PC-3 (cell line): ENCODE measurements at regions of chr4 and their contacts with region 1.

Region 1: DNA sequence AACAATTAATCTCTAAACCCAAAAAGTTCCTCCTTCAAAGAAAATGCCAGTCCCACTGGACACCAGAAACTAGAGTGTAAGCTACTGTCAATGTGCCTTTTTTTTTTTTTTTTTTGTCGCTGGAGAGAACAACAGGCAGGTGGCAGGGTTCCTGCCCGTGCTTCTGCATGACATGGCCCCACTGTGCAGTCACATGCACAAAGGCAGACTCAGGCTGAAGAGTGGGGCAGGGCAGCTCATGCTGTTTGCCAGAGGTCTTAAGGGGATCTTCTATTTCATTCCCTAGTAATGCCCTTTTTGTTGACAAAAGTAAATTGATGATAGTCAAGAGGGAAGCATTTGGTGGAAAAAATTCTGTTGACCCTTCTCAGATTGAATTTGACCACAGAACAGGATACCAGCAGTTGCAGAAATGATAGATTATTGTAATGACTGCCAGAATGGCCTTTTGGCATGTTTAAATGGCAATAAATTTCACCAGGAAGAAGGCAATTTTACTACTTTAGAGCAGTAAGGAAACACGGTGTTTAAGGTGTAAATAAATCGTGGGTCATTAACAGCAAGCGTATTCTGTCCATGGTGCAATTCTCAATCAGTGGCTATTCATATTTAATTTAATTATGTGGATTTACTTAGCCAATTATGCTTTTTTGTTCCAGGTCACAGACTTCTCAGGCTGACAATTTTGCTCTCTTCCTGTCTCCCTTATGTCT is 80.9 kb downstream of the NKX6-1 start:
- DNase-seq: no peak
- ATAC-seq: no peak; the same call in 1 of the 2 replicates
- H3K4me3 ChIP-seq: no peak overlapping the region
- H3K27ac ChIP-seq: no peak overlapping the region
- H3K4me1 ChIP-seq: no peaks in the 10 kb centered on the region
- H3K27me3 ChIP-seq: no peaks in the 10 kb centered on the region
- CTCF ChIP-seq: no peak

Region 2: GRCh38 chr4:84279678-84280077 is 138.5 kb before region 1 on chr4:
- CTCF ChIA-PET with region 1: interaction called, 14 read pairs
- POLR2A ChIA-PET with region 1: no interaction called
- intact Hi-C with region 1: no loop called
- DNase-seq: peak; percentile 30
- ATAC-seq: no peak
- H3K4me3 ChIP-seq: no peak overlapping the region
- H3K27ac ChIP-seq: no peak overlapping the region
- H3K4me1 ChIP-seq: no peaks in the 10 kb centered on the region
- H3K27me3 ChIP-seq: no peaks in the 10 kb centered on the region
- CTCF ChIP-seq: no peak

Region 3: GRCh38 chr4:84470204-84470785 is 52.1 kb after region 1 on chr4:
- CTCF ChIA-PET with region 1: no interaction called
- POLR2A ChIA-PET with region 1: no interaction called
- intact Hi-C with region 1: no loop called
- DNase-seq: no peak
- ATAC-seq: no peak
- H3K4me3 ChIP-seq: no peak overlapping the region
- H3K27ac ChIP-seq: no peak overlapping the region
- H3K4me1 ChIP-seq: no peaks in the 10 kb centered on the region
- H3K27me3 ChIP-seq: no peaks in the 10 kb centered on the region
- CTCF ChIP-seq: peak; percentile 36; the same call in 1 of the 2 replicates